Activated CD8-positive, alpha-beta T cell treated with anti-CD3 and anti-CD28 coated beads, Interleukin-2, amount 10 ng/mL, durations not matched to agents 7 days and 5 days (primary cell): ENCODE measurements at regions of chrX and their contacts with region 1.

Region 1: DNA sequence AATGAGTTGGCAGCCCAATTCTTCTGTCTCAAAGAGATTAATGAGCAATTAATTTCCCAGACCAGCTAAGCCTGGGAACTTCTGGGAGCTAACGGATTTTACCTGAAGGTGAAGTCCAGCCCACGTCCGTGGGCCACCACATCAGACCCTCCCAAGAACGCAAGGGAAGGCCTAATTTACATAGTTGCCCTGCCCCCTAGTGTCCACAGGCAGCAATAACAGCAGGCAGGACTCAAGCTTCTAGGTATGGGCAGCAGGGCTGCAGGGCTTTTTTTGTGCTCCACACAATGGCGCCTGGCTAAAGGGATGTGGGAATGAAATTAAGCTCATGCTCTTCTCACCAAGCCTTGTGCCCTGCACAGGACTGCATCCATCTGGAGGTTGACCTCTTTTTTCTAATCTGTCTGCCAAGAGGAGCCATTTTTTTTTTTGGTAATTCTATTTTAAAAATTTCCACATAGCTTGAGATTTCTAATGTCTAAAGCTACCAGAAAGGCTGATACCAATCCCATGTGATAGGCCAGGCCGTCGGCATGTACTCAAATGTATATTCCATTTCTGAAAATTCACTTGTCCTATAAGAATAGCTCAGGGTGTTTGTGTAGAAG is 111.9 kb upstream of the TMEM164 start:
- DNase-seq: peak; percentile 53
- ATAC-seq: peak; percentile 74
- H3K4me3 Mint-ChIP-seq: no peak overlapping the region
- H3K27ac Mint-ChIP-seq: no peak overlapping the region
- H3K4me1 Mint-ChIP-seq: no peaks in the 10 kb centered on the region
- H3K27me3 Mint-ChIP-seq: peaks cover 4% of the 10 kb centered on the region

Region 2: DNA sequence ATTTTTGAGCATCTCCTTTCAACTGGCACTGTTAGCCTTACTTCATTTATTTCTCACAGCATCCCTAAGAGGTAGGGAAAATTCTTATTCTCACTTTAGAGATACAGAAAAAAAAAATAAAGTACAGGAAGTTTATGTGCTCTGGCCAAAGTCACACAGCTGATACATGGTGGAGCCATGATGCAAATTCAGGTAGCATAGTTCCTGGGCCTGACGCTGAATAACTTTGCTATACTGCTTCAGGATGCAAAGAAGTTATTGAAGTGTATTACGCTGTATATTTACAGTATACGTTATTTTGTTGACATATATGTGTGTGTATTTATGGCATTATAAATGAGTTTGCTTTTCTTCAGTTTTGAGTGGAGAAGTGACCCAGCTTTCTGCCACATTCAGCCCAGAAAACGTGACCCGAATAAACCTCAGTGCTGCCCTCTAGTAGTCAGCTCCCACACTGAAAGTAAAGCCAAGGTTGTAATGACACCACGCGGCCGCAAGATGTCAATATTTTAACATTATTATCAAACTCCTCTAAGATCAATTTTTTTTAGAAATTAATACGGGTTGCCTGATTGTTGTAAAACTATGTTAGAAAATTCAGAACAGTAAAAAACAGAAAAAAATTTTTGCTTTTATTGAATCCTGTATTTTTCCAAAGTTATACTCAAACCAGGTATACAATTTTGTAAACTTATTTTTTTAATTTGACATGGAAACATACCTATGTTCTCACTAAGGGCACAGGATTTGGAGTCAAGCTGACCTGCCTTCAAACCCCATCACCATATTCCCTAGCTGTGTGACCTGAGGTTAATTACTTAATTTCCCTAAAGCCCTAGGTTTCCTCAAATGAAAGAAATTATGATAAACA is 405.3 kb before region 1 on chrX:
- CTCF ChIA-PET with region 1: interaction called, 13 read pairs
- POLR2A ChIA-PET with region 1: no interaction called
- DNase-seq: peak; percentile 71
- ATAC-seq: peak; percentile 23
- H3K4me3 Mint-ChIP-seq: no peak overlapping the region
- H3K27ac Mint-ChIP-seq: no peak overlapping the region
- H3K4me1 Mint-ChIP-seq: no peaks in the 10 kb centered on the region
- H3K27me3 Mint-ChIP-seq: peaks cover 6% of the 10 kb centered on the region

Region 3: DNA sequence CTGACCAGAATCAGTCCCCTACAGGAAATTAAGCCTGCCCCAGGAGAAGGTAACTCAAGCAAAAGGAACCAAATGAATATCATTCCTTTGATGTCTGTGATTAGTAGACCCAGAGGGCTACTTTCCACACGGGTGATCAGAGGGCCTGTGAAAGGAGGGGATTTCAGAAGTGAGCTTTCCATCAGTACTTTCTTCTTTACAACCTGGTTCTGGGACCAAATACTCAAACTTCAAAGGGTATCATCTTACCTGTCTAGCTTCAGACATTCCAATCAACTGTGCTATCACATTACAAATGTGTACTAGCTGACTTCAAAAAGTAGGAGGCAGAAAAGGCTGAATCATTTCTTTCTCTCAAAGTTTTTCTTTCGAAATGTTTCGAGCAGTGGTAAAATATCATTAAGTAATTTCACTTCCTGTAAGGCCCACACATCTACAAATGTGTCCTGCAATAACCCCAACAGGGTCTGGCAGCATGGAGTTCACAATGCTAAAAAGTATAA is 181.8 kb before region 1 on chrX:
- CTCF ChIA-PET with region 1: interaction called, 30 read pairs
- POLR2A ChIA-PET with region 1: no interaction called
- DNase-seq: no peak
- ATAC-seq: peak; percentile 46
- H3K4me3 Mint-ChIP-seq: peak overlapping the region; percentile 55
- H3K27ac Mint-ChIP-seq: peak overlapping the region; percentile 89
- H3K4me1 Mint-ChIP-seq: peaks cover 59% of the 10 kb centered on the region
- H3K27me3 Mint-ChIP-seq: no peaks in the 10 kb centered on the region

Region 4: DNA sequence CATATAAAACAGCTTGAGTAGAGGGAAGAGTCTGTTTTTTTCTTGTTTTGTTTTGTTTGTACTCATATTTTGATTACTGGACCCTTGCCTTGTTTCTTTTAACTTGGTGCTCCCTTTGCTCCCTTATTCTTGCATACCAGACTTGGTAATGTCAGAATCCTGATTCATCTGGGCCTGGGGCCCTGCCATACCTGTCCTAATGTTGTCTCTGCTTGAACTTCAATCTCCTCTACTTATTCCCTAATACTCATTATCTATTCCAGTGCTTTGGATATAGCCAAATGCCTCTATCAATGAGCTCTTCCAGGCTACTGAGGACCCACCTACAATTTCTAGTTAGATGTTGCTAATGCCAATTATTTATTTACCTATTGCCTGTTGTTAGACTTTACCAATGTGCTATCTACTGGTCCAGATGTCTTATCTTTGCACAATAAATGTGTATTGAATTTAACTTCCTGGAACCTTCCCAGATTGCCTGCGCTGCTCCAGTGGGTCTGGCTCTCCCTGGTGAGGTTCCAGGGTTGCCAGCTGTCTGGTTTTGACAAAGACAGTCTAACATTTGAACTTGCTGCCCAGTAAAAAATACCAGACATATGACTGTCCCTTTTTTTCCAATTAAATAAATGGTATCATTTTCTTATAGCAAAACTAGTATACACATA is 93.6 kb before region 1 on chrX:
- CTCF ChIA-PET with region 1: no interaction called
- POLR2A ChIA-PET with region 1: no interaction called
- DNase-seq: no peak
- ATAC-seq: no peak
- H3K4me3 Mint-ChIP-seq: no peak overlapping the region
- H3K27ac Mint-ChIP-seq: no peak overlapping the region
- H3K4me1 Mint-ChIP-seq: no peaks in the 10 kb centered on the region
- H3K27me3 Mint-ChIP-seq: peaks cover 2% of the 10 kb centered on the region

Region 5: DNA sequence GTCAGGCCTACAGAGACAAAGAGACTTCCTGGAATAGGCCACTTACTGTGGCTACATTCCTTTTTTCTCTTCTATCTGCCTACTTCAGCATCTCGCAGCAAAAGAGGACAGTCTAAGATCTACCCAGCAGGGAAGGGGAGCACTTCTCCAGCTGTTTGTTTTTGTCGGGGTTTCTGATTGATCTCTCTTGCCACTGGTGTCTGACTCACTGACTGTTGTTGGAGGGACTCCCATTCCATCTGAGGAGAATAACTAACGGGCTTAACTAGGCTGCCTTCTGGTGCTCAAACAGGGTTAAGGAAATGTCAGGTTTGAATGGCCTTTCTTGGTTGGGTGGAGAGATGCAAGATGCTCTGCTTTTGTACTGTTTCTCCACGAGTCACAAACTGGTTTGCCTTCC is 11.7 kb after region 1 on chrX:
- CTCF ChIA-PET with region 1: interaction called, 10 read pairs
- POLR2A ChIA-PET with region 1: no interaction called
- DNase-seq: no peak
- ATAC-seq: no peak
- H3K4me3 Mint-ChIP-seq: no peak overlapping the region
- H3K27ac Mint-ChIP-seq: no peak overlapping the region
- H3K4me1 Mint-ChIP-seq: peaks cover 6% of the 10 kb centered on the region
- H3K27me3 Mint-ChIP-seq: peaks cover 9% of the 10 kb centered on the region